ENCODE measurements at regions of chr14 and their contacts with region 1.

Region 1: GRCh38 chr14:44961604-44962333 is at the starts of genes KLHL28 and TOGARAM1:
- DNase-seq: peak; percentile 97
- ATAC-seq: peak; percentile 98
- total RNA-seq, gene KLHL28: 13.0 TPM
- total RNA-seq, gene TOGARAM1: 20.5 TPM

Region 2: DNA sequence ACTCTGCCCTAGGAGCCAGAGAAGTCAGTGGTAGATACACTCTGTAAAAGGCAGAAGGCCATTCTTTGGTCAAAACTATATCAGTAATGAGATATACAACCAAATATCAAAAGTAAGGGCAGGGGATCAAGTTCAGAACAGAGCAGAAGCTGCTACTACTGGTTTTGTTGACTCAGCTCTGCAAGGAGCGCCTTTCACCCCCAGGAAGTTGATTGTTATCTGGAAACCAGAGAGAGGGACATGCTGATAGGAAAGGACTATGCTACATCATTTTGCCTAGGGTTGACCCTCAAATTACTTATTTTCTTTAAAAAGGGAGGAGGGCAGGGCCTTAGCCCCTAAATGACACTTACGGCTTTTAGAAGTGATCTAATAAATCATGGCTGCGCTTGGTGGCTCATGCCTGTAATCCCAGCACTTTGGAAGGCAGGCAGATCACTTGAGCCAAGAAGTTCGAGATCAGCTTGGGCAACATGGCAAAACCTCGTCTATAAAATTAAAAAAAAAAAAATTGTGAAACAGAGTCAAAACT is 194.1 kb before region 1 on chr14:
- intact Hi-C with region 1: no loop called
- DNase-seq: no peak
- ATAC-seq: no peak

Region 3: DNA sequence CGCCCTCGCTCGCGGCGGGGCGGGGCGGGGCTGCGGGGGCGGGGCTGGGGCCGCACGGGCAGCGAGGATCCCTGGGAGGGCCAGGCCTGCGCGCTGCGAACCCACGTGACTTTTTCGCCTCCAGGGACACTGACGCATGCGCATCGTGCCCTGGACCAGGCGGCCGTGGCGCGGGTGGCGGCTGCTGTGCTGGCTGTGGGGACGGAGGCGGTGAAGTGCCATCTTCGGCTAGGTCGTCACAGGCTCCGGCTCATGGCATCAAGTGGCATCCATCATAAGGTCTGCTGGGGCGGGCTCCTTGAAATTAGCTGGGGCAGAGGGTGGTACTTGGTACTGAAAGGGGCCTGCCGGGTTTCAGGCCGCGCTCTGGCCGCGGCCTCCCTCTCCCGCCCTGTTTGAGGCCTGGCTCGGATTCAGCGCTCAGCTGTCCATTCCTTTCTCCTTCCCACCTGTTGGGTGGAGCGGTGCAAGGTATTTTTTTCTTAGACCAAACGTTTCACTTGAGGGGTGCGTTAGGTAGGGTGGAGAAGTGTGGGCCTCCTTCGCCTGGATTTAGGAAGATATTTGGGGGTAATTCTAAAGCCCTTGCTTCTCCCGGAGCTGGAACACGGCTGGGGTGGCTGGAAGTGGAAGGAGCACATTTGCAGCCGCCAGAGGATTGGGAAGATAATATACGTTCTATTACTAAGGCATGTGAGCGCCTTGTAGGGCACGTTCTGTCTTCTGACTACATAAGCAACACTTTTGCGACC is 122.4 kb after region 1 on chr14 and contains the start of gene PRPF39:
- intact Hi-C with region 1: loop called (anchors 5 kb)
- DNase-seq: peak; percentile 97
- ATAC-seq: peak; percentile 100
- total RNA-seq, gene PRPF39: 10.5 TPM

Region 4: DNA sequence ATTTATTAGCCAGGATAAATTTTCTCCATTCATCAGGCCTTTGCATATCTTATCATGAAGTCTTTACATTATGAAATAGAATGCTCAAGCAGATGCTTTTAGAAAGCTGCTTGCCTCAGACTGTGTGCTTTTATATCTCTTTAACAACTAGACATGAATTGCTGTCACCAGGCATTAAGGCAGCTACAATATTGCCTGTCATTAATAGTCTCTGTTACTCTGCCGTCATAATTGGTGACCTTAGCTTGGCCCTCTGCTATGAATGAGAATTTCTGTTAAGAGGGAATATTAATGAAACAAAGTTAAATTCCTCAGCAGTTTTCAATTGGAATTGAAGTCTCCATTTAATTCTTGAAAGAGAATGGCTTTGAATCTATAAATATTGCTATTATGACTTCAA is 558.0 kb after region 1 on chr14:
- intact Hi-C with region 1: no loop called
- DNase-seq: no peak
- ATAC-seq: no peak

Measured in Right ventricle myocardium inferior (tissue), 1 donor.